Heart right ventricle (tissue), 16 donors: ENCODE measurements at regions of chr22 and their contacts with region 1.

Region 1: GRCh38 chr22:20916983-20917810 is at the start of gene CRKL:
- DNase-seq: peak; percentile 97 to 98
- ATAC-seq: peak; percentile 99 to 100 (median 100)
- H3K4me3 ChIP-seq: peak within 1 kb of the TSS; percentile 66 to 99 (median 90)
- H3K27ac ChIP-seq: peak within 1 kb of the TSS; percentile 77 to 99 (median 96)
- H3K4me1 ChIP-seq: peaks cover 6 to 41% (median 35%) of the 10 kb centered on the region in 9 donors
- H3K27me3 ChIP-seq: no peaks in the 10 kb centered on the region
- CTCF ChIP-seq: peak; percentile 87 to 99 (median 96)
- total RNA-seq, gene CRKL: 43.3 to 76.9 (median 56.5) TPM

Region 2: GRCh38 chr22:20816559-20816958 is 100.6 kb before region 1 on chr22:
- intact Hi-C with region 1: no loop called
- DNase-seq: no peak
- ATAC-seq: no peak
- H3K4me3 ChIP-seq: no peak overlapping the region
- H3K27ac ChIP-seq: no peak overlapping the region
- H3K4me1 ChIP-seq: no peaks in the 10 kb centered on the region
- H3K27me3 ChIP-seq: no peaks in the 10 kb centered on the region
- CTCF ChIP-seq: no peak

Region 3: DNA sequence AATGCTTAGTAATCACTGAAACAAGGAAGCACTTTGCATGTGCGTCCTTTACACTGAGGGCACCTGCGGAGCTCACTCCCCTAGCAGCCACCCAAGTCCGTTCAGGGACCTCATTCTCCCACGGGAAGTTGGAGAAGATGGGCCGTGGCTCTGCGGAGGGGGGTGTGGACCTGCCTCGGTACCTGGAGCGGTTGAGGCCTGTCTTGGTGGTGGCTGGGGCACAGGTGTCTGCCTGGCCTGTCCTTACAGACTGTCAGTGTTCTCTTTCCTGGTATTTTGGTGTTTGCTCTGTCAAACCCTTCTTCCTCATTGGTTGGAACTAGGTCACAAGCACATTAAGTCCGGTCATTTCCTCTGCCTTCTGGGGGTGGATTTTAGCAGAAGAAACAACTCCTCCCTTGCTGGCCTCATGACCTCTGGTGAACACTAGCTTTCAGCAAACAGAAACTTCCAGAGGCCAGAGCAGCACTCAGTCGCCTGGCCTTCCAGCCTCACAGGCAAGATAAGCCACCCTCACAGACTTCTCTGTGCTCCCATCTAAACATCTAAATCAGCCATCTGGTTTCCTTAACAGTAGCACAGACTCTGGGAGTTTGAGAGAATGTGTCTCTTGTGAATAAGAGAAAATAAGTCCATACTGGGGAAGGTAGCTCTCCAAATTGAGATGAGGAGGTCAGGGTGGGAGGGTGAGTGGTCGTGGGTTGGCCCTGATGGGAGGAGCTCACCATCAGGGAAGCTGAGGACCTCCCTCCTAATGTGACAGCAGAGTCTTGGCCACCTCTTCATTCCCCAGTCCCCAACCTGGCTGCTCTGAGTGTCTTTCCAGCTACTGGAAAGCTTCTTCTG is 49.8 kb before region 1 on chr22:
- intact Hi-C with region 1: loop called in 2 of 10 experiments (anchors 10 kb)
- DNase-seq: peak; percentile 35 to 73
- ATAC-seq: peak; percentile 70 to 96 (median 93)
- H3K4me3 ChIP-seq: peak overlapping the region in 5 of 10 donors; percentile 2 to 34 (median 26)
- H3K27ac ChIP-seq: peak overlapping the region; percentile 74 to 94 (median 81)
- H3K4me1 ChIP-seq: peaks cover 21 to 62% (median 35%) of the 10 kb centered on the region in 9 donors
- H3K27me3 ChIP-seq: no peaks in the 10 kb centered on the region
- CTCF ChIP-seq: no peak

Region 4: GRCh38 chr22:20957316-20958101 is 40.3 kb after region 1 on chr22:
- intact Hi-C with region 1: loop called in 2 of 10 experiments (anchors 5 to 10 kb)
- DNase-seq: peak in 1 of 2 donors; percentile 45
- ATAC-seq: peak; percentile 45 to 77 (median 67)
- H3K4me3 ChIP-seq: peak overlapping the region; percentile 46 to 73 (median 66)
- H3K27ac ChIP-seq: peak overlapping the region in 6 of 10 donors; percentile 20 to 78 (median 42)
- H3K4me1 ChIP-seq: peaks cover 3 to 32% (median 19%) of the 10 kb centered on the region in 9 donors
- H3K27me3 ChIP-seq: peaks cover 0 to 3% (median 0%) of the 10 kb centered on the region in 7 donors
- CTCF ChIP-seq: no peak

Region 5: GRCh38 chr22:20981787-20982562 is 64.8 kb after region 1 on chr22 and contains the start of gene LZTR1:
- intact Hi-C with region 1: loop called in 4 of 10 experiments (anchors 2 to 10 kb)
- DNase-seq: peak; percentile 80 to 83
- ATAC-seq: peak; percentile 93 to 97 (median 96)
- H3K4me3 ChIP-seq: peak within 1 kb of the TSS; percentile 61 to 98 (median 76)
- H3K27ac ChIP-seq: peak within 1 kb of the TSS; percentile 75 to 98 (median 92)
- H3K4me1 ChIP-seq: peaks cover 20 to 42% (median 34%) of the 10 kb centered on the region in 9 donors
- H3K27me3 ChIP-seq: no peaks in the 10 kb centered on the region
- CTCF ChIP-seq: peak; percentile 8 to 79 (median 64)
- total RNA-seq, gene LZTR1: 14.7 to 32.5 (median 23.7) TPM

Region 6: DNA sequence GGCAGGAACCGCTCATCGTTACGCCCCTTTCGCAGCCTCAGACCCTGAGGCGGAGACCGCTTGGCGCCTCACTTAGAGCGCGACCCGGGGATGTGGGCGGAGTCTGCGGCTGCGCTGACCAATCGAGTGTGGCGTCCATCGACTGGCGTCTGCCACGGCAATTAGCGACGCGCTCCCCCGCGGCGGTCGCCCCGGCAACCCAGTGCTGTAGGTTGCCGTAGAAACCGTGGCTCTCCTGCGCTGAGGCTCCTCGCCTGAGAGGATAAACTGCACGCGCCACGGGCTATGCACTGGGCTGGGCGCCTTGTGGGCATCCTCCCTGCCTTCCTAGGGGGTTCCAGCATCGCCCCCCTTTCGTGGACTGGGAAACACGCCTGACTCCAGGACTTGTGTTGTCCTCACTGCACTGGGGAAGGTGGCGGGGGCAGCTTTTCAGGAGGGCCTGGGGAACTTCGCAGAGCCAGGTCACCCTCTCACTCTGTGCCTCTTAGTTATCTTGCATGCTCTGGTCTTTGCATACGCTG is 97.1 kb after region 1 on chr22:
- intact Hi-C with region 1: loop called in 2 of 10 experiments (anchors 10 kb)
- DNase-seq: peak; percentile 91 to 92
- ATAC-seq: peak; percentile 89 to 97 (median 94)
- H3K4me3 ChIP-seq: peak overlapping the region; percentile 40 to 63 (median 58)
- H3K27ac ChIP-seq: peak overlapping the region in 9 of 10 donors; percentile 49 to 86 (median 70)
- H3K4me1 ChIP-seq: peaks cover 11 to 26% (median 20%) of the 10 kb centered on the region in 9 donors
- H3K27me3 ChIP-seq: no peaks in the 10 kb centered on the region
- CTCF ChIP-seq: no peak